ENCODE measurements at regions of chr7 and their contacts with region 1.

Region 1: GRCh38 chr7:91264046-91264923 is at the start of gene FZD1:
- DNase-seq: peak; percentile 99
- ATAC-seq: peak; percentile 89
- H3K4me3 ChIP-seq: peak within 1 kb of the TSS; percentile 75
- H3K27ac ChIP-seq: peak within 1 kb of the TSS; percentile 89
- H3K4me1 ChIP-seq: peaks cover 4% of the 10 kb centered on the region
- H3K27me3 ChIP-seq: no peaks in the 10 kb centered on the region
- CTCF ChIP-seq: no peak
- POLR2A ChIP-seq: peak; percentile 63; the same call in 1 of the 2 replicates
- RAD21 ChIP-seq: peak; percentile 25; the same call in 1 of the 2 replicates
- total RNA-seq, gene FZD1: 3.6 and 4.4 TPM in 2 replicates

Region 2: GRCh38 chr7:91082852-91083495 is 181.3 kb before region 1 on chr7:
- CTCF ChIA-PET with region 1: no interaction called
- POLR2A ChIA-PET with region 1: no interaction called
- dilution Hi-C with region 1: no loop called
- in situ Hi-C with region 1: loop called (anchors 5 kb)
- intact Hi-C with region 1: loop called (anchors 1 kb)
- DNase-seq: peak; percentile 62
- ATAC-seq: peak; percentile 43; the same call in 1 of the 2 replicates
- H3K4me3 ChIP-seq: no peak overlapping the region
- H3K27ac ChIP-seq: peak overlapping the region; percentile 13; the same call in 1 of the 2 replicates
- H3K4me1 ChIP-seq: 0 out of 2 replicates have a peak, but pooled peaks cover 2% of the 10 kb centered on the region
- H3K27me3 ChIP-seq: no peaks in the 10 kb centered on the region
- CTCF ChIP-seq: peak; percentile 70
- POLR2A ChIP-seq: no peak
- RAD21 ChIP-seq: peak; percentile 69

Region 3: GRCh38 chr7:91128683-91129348 is 135.5 kb before region 1 on chr7:
- CTCF ChIA-PET with region 1: no interaction called
- POLR2A ChIA-PET with region 1: no interaction called
- dilution Hi-C with region 1: no loop called
- in situ Hi-C with region 1: no loop called
- intact Hi-C with region 1: loop called (anchors 1 kb)
- DNase-seq: peak; percentile 38
- ATAC-seq: peak; percentile 75
- H3K4me3 ChIP-seq: peak overlapping the region; percentile 7; the same call in 1 of the 2 replicates
- H3K27ac ChIP-seq: peak overlapping the region; percentile 89; the same call in 1 of the 2 replicates
- H3K4me1 ChIP-seq: peaks cover 6% of the 10 kb centered on the region
- H3K27me3 ChIP-seq: no peaks in the 10 kb centered on the region
- CTCF ChIP-seq: no peak
- POLR2A ChIP-seq: no peak
- RAD21 ChIP-seq: no peak

Region 4: DNA sequence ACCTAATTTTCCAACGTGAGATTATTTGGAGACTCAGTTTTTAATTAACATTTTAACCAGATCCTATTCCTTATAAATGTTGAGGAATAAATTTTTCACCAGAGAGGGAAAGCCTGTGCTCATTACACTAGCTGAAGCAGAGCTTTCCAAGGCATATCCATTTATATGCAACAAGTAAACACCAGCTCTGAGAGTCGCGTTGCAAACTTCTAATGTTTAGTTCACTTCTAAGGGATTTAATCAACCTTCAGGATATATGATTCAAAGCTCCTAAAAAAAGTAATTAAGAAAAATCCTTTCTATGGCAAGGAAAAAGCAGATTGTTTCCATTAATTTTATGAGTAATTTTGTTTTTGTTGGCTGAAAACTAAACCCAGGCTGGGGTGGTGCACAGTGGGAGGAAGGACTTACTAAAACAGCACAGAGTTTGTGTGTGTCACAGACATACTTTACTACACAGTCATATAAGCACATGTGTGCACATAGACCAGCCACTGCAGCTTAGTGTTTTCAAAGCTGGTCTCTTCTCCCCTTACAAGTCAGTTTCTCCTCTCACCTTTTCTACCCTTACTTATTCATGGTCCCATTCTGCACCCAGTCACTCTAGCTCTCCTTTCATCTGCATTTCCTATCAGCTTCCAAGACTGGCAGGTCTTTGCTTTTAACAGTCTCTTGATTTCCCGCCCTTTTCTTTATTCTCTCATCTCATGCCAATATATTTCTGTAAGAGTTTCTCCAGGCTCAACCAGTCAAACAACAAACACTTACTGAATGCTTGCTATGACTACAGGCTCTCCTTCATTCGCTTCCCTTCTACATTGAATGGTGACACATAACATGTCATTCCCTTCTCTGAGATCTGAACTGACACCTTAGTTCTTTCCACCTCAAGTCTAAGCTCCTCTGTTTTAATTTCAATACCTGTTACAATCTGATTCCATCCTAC is 81.2 kb before region 1 on chr7:
- CTCF ChIA-PET with region 1: no interaction called
- POLR2A ChIA-PET with region 1: no interaction called
- dilution Hi-C with region 1: no loop called
- in situ Hi-C with region 1: no loop called
- intact Hi-C with region 1: loop called (anchors 1 kb)
- DNase-seq: peak; percentile 98
- ATAC-seq: peak; percentile 96
- H3K4me3 ChIP-seq: no peak overlapping the region
- H3K27ac ChIP-seq: no peak overlapping the region
- H3K4me1 ChIP-seq: peaks cover 6% of the 10 kb centered on the region; the same call in 1 of the 2 replicates
- H3K27me3 ChIP-seq: no peaks in the 10 kb centered on the region
- CTCF ChIP-seq: no peak
- POLR2A ChIP-seq: no peak
- RAD21 ChIP-seq: no peak

Region 5: GRCh38 chr7:91880413-91881241 is 616.3 kb after region 1 on chr7 and contains the start of gene MTERF1:
- CTCF ChIA-PET with region 1: no interaction called
- POLR2A ChIA-PET with region 1: no interaction called
- dilution Hi-C with region 1: no loop called
- in situ Hi-C with region 1: no loop called
- intact Hi-C with region 1: loop called (anchors 2 kb)
- DNase-seq: peak; percentile 88
- ATAC-seq: peak; percentile 96
- H3K4me3 ChIP-seq: peak within 1 kb of the TSS; percentile 97
- H3K27ac ChIP-seq: peak within 1 kb of the TSS; percentile 77
- H3K4me1 ChIP-seq: no peaks in the 10 kb centered on the region
- H3K27me3 ChIP-seq: no peaks in the 10 kb centered on the region
- CTCF ChIP-seq: peak; percentile 100
- POLR2A ChIP-seq: peak; percentile 45; the same call in 1 of the 2 replicates
- RAD21 ChIP-seq: peak; percentile 73
- total RNA-seq, gene MTERF1: 7.0 and 16.7 TPM in 2 replicates

Measured in IMR-90 (cell line).